Heart right ventricle (tissue), 16 donors: ENCODE measurements at regions of chr7 and their contacts with region 1.

Region 1: GRCh38 chr7:47371729-47372368 is 210.1 kb downstream of the TNS3 start:
- DNase-seq: peak; percentile 87 to 88
- ATAC-seq: peak; percentile 72 to 91 (median 86)
- H3K4me3 ChIP-seq: peak overlapping the region in 3 of 10 donors; percentile 3 to 14 (median 12)
- H3K27ac ChIP-seq: peak overlapping the region in 5 of 10 donors; percentile 3 to 48 (median 26)
- H3K4me1 ChIP-seq: peaks cover 5 to 62% (median 44%) of the 10 kb centered on the region in 9 donors
- H3K27me3 ChIP-seq: no peaks in the 10 kb centered on the region
- CTCF ChIP-seq: no peak

Region 2: DNA sequence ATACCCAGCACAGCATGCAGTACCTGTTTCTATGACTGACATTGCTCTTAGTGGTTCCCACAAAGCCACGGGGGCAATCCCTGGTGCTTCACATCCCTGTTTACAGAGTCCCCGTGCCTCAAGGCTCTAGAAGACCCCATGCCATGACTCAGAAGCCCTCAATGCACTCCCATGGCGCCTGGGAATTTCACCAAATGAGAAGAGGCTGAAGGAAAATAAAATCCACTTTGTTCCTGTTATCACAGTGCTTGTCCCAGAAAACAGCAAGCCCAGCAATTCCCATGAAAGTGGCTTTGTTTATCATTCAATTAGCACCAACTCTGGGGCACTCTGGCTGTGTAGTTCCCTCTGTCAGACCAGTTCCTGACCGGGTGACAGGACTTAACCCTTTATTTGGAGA is 58.3 kb before region 1 on chr7:
- intact Hi-C with region 1: no loop called
- DNase-seq: no peak
- ATAC-seq: no peak
- H3K4me3 ChIP-seq: no peak overlapping the region
- H3K27ac ChIP-seq: peak overlapping the region in 5 of 10 donors; percentile 76 to 90 (median 86)
- H3K4me1 ChIP-seq: peaks cover 17 to 69% (median 41%) of the 10 kb centered on the region in 9 donors
- H3K27me3 ChIP-seq: no peaks in the 10 kb centered on the region
- CTCF ChIP-seq: no peak

Region 3: GRCh38 chr7:47327698-47328391 is 44.0 kb before region 1 on chr7:
- intact Hi-C with region 1: loop called in 1 of 10 experiments (anchors 5 kb)
- DNase-seq: peak; percentile 91 to 94
- ATAC-seq: peak; percentile 88 to 95 (median 91)
- H3K4me3 ChIP-seq: peak overlapping the region in 9 of 10 donors; percentile 14 to 54 (median 47)
- H3K27ac ChIP-seq: peak overlapping the region; percentile 81 to 96 (median 90)
- H3K4me1 ChIP-seq: peaks cover 22 to 90% (median 60%) of the 10 kb centered on the region in 9 donors
- H3K27me3 ChIP-seq: no peaks in the 10 kb centered on the region
- CTCF ChIP-seq: no peak

Region 4: DNA sequence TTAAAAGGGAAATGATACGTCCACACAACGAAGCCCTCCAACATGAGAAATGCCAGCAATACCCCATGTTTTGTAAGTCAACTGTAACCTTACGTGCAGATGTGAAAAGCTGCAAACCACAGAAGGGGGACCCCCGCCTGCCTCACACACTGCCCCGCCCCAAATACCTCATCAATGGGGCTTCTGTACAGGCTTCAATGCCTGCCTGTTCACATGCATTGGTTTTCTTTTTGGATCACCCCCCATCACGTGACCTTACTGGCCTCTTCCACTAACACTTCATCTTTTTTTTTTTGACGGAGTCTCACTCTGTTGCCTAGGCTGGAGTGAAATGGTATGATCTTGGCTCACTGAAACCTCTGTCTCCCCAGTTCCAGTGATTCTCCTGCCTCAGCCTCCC is 14.0 kb before region 1 on chr7:
- intact Hi-C with region 1: loop called in 1 of 10 experiments (anchors 1 kb)
- DNase-seq: no peak
- ATAC-seq: no peak
- H3K4me3 ChIP-seq: no peak overlapping the region
- H3K27ac ChIP-seq: no peak overlapping the region
- H3K4me1 ChIP-seq: peaks cover 0 to 49% (median 21%) of the 10 kb centered on the region in 9 donors
- H3K27me3 ChIP-seq: no peaks in the 10 kb centered on the region
- CTCF ChIP-seq: no peak